ENCODE measurements at regions of chr11 and their contacts with region 1.

Region 1: GRCh38 chr11:31958076-31958735 is 132.7 kb upstream of the RCN1 start:
- DNase-seq: peak; percentile 60
- H3K4me3 ChIP-seq: peak overlapping the region in 1 of 2 experiments; percentile 53; a peak in 1 of 4 replicates
- H3K27ac ChIP-seq: no peak overlapping the region
- H3K4me1 ChIP-seq: no peaks in the 10 kb centered on the region; a peak in 1 of 4 replicates
- H3K27me3 ChIP-seq: peaks cover 8% of the 10 kb centered on the region; the same call in 1 of the 2 replicates
- CTCF ChIP-seq: peak; percentile 73
- EP300 ChIP-seq: no peak
- RAD21 ChIP-seq: peak; percentile 64

Region 2: GRCh38 chr11:31240338-31240904 is 717.8 kb before region 1 on chr11:
- CTCF ChIA-PET with region 1: interaction called, 12 read pairs
- POLR2A ChIA-PET with region 1: no interaction called
- DNase-seq: peak; percentile 14
- H3K4me3 ChIP-seq: no peak overlapping the region; a peak in 1 of 4 replicates
- H3K27ac ChIP-seq: no peak overlapping the region
- H3K4me1 ChIP-seq: peaks cover 0 to 14% of the 10 kb centered on the region in 2 experiments; a peak in 1 of 4 replicates
- H3K27me3 ChIP-seq: no peaks in the 10 kb centered on the region
- CTCF ChIP-seq: peak; percentile 70
- EP300 ChIP-seq: no peak
- RAD21 ChIP-seq: peak; percentile 78

Region 3: DNA sequence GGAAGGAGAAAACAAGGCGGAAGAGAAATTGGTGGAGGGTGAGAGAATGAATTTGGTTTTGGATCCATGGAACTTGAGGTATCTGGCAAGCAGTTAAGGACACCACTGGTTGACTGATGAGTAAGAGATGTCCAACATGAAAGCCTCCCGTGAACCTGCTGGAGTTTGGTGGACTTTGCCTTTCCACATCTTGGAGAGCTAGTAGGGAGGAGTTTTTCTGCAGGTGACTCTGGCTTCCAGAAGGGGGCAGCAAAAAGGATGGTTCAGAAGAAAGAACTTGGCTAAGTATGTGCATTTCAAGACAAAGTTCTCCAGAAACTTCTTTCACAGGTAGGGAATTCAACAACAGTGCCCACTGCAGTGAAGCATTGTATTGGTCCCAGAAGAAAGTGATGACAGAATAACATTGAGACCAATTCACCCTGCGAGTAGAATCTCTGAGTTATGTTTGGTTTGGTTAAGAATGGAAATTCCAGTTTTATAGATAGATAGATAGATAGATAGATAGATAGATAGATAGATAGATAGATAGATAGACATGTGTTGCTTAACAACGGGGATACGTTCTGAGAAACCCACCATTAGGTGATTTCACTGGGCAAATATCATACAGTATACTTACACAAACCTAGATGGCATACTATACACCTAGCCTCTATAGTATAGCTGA is 617.2 kb before region 1 on chr11:
- CTCF ChIA-PET with region 1: interaction called, 16 read pairs
- POLR2A ChIA-PET with region 1: no interaction called
- DNase-seq: peak; percentile 12
- H3K4me3 ChIP-seq: no peak overlapping the region
- H3K27ac ChIP-seq: no peak overlapping the region
- H3K4me1 ChIP-seq: no peaks in the 10 kb centered on the region
- H3K27me3 ChIP-seq: no peaks in the 10 kb centered on the region
- CTCF ChIP-seq: peak; percentile 66
- EP300 ChIP-seq: no peak
- RAD21 ChIP-seq: peak; percentile 46; the same call in 1 of the 2 replicates

Region 4: DNA sequence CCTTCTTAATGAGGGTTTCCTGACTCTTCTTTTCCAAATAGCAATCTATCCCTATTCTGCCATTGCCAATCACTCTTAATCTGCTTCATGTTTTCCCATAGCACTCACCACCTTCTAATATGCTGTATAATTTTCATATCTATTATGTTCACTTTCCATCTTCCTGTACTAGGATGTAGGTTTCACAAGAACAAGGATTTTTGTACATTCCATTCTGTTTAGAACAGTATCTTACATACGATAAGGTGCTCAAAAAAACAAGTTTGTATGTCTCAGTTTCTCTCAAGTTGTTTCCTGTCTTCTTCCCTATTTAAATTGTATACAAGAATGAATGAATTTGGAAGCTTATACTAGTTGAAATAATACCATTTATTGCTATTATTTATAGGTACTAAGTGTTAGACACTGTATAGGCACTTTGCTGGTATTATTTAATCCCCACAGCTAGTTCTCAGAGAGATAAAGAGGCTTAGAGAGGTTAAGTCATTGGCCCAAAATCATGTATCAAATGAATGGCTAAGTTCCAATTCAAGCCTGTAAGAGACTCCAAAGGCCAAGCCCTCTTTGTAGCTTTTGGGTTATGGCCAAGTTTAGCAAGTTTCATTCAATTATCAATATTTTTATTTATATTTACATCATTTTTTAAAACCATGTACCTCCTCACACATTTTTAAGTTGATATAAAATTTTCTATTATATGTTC is 281.8 kb before region 1 on chr11:
- CTCF ChIA-PET with region 1: no interaction called
- POLR2A ChIA-PET with region 1: no interaction called
- DNase-seq: no peak
- H3K4me3 ChIP-seq: no peak overlapping the region
- H3K27ac ChIP-seq: no peak overlapping the region
- H3K4me1 ChIP-seq: peaks cover 0 to 2% of the 10 kb centered on the region in 2 experiments; a peak in 1 of 4 replicates
- H3K27me3 ChIP-seq: no peaks in the 10 kb centered on the region
- CTCF ChIP-seq: no peak
- EP300 ChIP-seq: no peak
- RAD21 ChIP-seq: no peak

Region 5: DNA sequence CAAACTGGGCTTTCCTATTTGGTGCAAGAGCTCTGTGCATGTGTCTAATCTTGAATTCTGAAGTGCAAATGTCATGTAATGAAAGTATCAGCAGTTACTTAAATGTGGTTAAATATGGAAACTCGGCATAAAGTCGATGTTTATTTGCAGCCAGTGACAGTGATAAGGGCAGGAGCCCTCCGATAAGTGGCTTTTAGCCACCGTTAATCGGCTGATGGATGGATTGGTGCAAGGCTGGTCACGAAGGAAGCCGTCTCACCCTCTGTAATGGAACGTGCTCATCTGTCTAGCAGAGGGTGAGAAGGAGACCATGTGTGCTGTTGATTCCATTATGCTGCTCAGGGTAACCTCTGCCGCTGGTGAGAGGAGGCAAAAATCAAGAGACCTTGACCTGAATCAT is 25.3 kb before region 1 on chr11:
- CTCF ChIA-PET with region 1: interaction called, 16 read pairs
- POLR2A ChIA-PET with region 1: no interaction called
- DNase-seq: no peak
- H3K4me3 ChIP-seq: no peak overlapping the region
- H3K27ac ChIP-seq: no peak overlapping the region
- H3K4me1 ChIP-seq: no peaks in the 10 kb centered on the region
- H3K27me3 ChIP-seq: peaks cover 38% of the 10 kb centered on the region; the same call in 1 of the 2 replicates
- CTCF ChIP-seq: no peak
- EP300 ChIP-seq: no peak
- RAD21 ChIP-seq: no peak

Region 6: GRCh38 chr11:31947051-31947769 is 11.0 kb before region 1 on chr11:
- CTCF ChIA-PET with region 1: interaction called, 10 read pairs
- POLR2A ChIA-PET with region 1: no interaction called
- DNase-seq: no peak
- H3K4me3 ChIP-seq: no peak overlapping the region
- H3K27ac ChIP-seq: no peak overlapping the region
- H3K4me1 ChIP-seq: no peaks in the 10 kb centered on the region
- H3K27me3 ChIP-seq: no peaks in the 10 kb centered on the region
- CTCF ChIP-seq: no peak
- EP300 ChIP-seq: no peak
- RAD21 ChIP-seq: no peak

Region 7: GRCh38 chr11:31968461-31969358 is 10.5 kb after region 1 on chr11:
- CTCF ChIA-PET with region 1: interaction called, 45 read pairs
- POLR2A ChIA-PET with region 1: interaction called, 3 read pairs
- DNase-seq: peak; percentile 62
- H3K4me3 ChIP-seq: peak overlapping the region; percentile 9 to 41; a peak in 1 of 4 replicates
- H3K27ac ChIP-seq: peak overlapping the region; percentile 1 to 71; a peak in 2 of 4 replicates
- H3K4me1 ChIP-seq: peaks cover 8 to 11% of the 10 kb centered on the region in 2 experiments; a peak in 3 of 4 replicates
- H3K27me3 ChIP-seq: no peaks in the 10 kb centered on the region; the same call in 1 of the 2 replicates
- CTCF ChIP-seq: no peak
- EP300 ChIP-seq: peak; percentile 39 to 77; a peak in 2 of 4 replicates
- RAD21 ChIP-seq: no peak

Measured in SK-N-SH (cell line).